Naive thymus-derived CD4-positive, alpha-beta T cell (primary cell): ENCODE measurements at regions of chr20 and their contacts with region 1.

Region 1: DNA sequence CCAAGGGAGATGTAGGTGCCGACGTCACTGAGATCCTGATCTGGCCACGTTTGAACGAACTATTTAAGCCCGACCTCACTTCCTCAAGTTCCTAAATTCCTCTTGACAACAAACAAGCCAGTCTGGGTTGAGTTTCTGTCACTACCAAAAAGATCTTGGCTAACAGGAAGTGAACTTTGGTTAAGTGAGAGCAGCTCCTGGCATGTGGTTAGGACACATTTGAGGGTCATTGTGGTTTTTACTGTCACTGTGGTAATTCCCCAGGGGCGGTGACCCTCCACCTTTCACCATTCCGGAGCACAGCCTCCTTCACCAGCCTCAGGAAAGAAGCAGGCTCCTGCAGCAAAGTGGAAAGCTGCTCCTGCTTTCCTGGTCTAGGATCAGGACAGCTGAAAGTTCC is 43.1 kb upstream of the ZNF831 start:
- DNase-seq: peak in 7 of 9 donors; percentile 23 to 48 (median 35)
- ATAC-seq: peak; percentile 40
- H3K4me3 ChIP-seq: no peak overlapping the region
- H3K4me3 Mint-ChIP-seq: peak overlapping the region; percentile 33 to 96 (median 56)
- H3K27ac ChIP-seq: peak overlapping the region; percentile 94
- H3K27ac Mint-ChIP-seq: peak overlapping the region; percentile 64 to 100 (median 100)
- H3K4me1 ChIP-seq: peaks cover 60 to 84% of the 10 kb centered on the region in 2 donors
- H3K4me1 Mint-ChIP-seq: peaks cover 51 to 98% (median 90%) of the 10 kb centered on the region in 7 donors
- H3K27me3 ChIP-seq: no peaks in the 10 kb centered on the region
- H3K27me3 Mint-ChIP-seq: no peaks in the 10 kb centered on the region

Region 2: GRCh38 chr20:57709931-57710799 is 1410.3 kb before region 1 on chr20 and contains the start of gene PMEPA1:
- CTCF ChIA-PET with region 1: no interaction called
- POLR2A ChIA-PET with region 1: no interaction called
- intact Hi-C with region 1: loop called in 1 of 2 experiments (anchors 1 kb)
- DNase-seq: peak; percentile 91 to 95 (median 93)
- ATAC-seq: peak; percentile 96
- H3K4me3 ChIP-seq: peak within 1 kb of the TSS; percentile 98
- H3K4me3 Mint-ChIP-seq: peak within 1 kb of the TSS; percentile 82 to 97 (median 94)
- H3K27ac ChIP-seq: peak within 1 kb of the TSS; percentile 88
- H3K27ac Mint-ChIP-seq: peak within 1 kb of the TSS; percentile 46 to 97 (median 95)
- H3K4me1 ChIP-seq: peaks cover 11 to 23% of the 10 kb centered on the region in 2 donors
- H3K4me1 Mint-ChIP-seq: peaks cover 15 to 55% (median 44%) of the 10 kb centered on the region in 7 donors
- H3K27me3 ChIP-seq: peaks cover 0 to 7% of the 10 kb centered on the region in 2 donors
- H3K27me3 Mint-ChIP-seq: peaks cover 0 to 51% (median 0%) of the 10 kb centered on the region in 5 donors
- total RNA-seq, gene PMEPA1: 0.44 to 10.0 (median 9.0) TPM

Region 3: DNA sequence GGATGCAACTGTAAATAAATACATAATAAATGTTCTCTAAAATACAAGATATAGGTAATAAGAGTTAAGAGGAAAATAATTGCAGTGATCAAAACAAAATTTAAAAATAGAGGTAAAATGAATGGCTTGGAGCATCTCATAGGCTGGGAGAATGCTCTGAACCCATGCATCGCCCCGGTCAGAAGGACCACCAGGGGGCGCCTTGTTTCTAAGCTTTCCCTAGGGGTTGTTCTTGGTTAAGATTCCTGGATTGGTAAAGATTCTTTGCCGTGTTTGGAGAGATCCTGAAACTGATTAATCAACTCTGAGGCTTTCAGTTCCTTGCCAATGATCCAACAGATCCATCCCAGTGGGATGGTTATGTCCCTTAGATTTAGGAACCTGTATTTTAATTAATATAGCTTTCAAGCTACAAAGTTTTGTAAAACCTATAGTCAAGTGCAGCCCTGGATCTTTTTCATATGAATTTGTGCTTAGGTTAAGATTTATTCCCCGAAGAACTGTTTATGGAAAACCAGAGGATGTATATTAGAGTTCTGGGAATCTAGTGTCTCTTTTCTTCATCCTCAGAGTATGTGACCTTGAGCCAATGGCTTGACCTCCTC is 32.6 kb before region 1 on chr20:
- CTCF ChIA-PET with region 1: interaction called, 33 read pairs
- POLR2A ChIA-PET with region 1: interaction called, 15 read pairs
- intact Hi-C with region 1: loop called in 1 of 2 experiments (anchors 1 kb)
- DNase-seq: peak; percentile 67 to 85 (median 78)
- ATAC-seq: peak; percentile 92
- H3K4me3 ChIP-seq: no peak overlapping the region
- H3K4me3 Mint-ChIP-seq: no peak overlapping the region
- H3K27ac ChIP-seq: no peak overlapping the region
- H3K27ac Mint-ChIP-seq: peak overlapping the region in 4 of 9 donors; percentile 10 to 58 (median 40)
- H3K4me1 ChIP-seq: peaks cover 0 to 5% of the 10 kb centered on the region in 2 donors
- H3K4me1 Mint-ChIP-seq: peaks cover 0 to 7% (median 5%) of the 10 kb centered on the region in 7 donors
- H3K27me3 ChIP-seq: no peaks in the 10 kb centered on the region
- H3K27me3 Mint-ChIP-seq: peaks cover 0 to 32% (median 0%) of the 10 kb centered on the region in 5 donors

Region 4: GRCh38 chr20:59141787-59142581 is 21.5 kb after region 1 on chr20:
- CTCF ChIA-PET with region 1: interaction called, 18 read pairs
- POLR2A ChIA-PET with region 1: interaction called, 172 read pairs
- intact Hi-C with region 1: loop called (anchors 1 kb)
- DNase-seq: no peak
- ATAC-seq: no peak
- H3K4me3 ChIP-seq: no peak overlapping the region
- H3K4me3 Mint-ChIP-seq: no peak overlapping the region
- H3K27ac ChIP-seq: no peak overlapping the region
- H3K27ac Mint-ChIP-seq: peak overlapping the region in 2 of 9 donors; percentile 65 to 72
- H3K4me1 ChIP-seq: peaks cover 19 to 26% of the 10 kb centered on the region in 2 donors
- H3K4me1 Mint-ChIP-seq: peaks cover 13 to 66% (median 58%) of the 10 kb centered on the region in 7 donors
- H3K27me3 ChIP-seq: no peaks in the 10 kb centered on the region
- H3K27me3 Mint-ChIP-seq: peaks cover 0 to 5% (median 0%) of the 10 kb centered on the region in 5 donors

Region 5: GRCh38 chr20:59165891-59166709 is 45.6 kb after region 1 on chr20:
- CTCF ChIA-PET with region 1: interaction called, 7 read pairs
- POLR2A ChIA-PET with region 1: interaction called, 73 read pairs
- intact Hi-C with region 1: loop called (anchors 1 kb)
- DNase-seq: peak in 5 of 9 donors; percentile 43 to 65 (median 50)
- ATAC-seq: peak; percentile 72
- H3K4me3 ChIP-seq: peak overlapping the region; percentile 48
- H3K4me3 Mint-ChIP-seq: peak overlapping the region; percentile 76 to 93 (median 87)
- H3K27ac ChIP-seq: peak overlapping the region; percentile 93
- H3K27ac Mint-ChIP-seq: peak overlapping the region; percentile 95 to 99 (median 98)
- H3K4me1 ChIP-seq: peaks cover 70 to 72% of the 10 kb centered on the region in 2 donors
- H3K4me1 Mint-ChIP-seq: peaks cover 68 to 97% (median 93%) of the 10 kb centered on the region in 7 donors
- H3K27me3 ChIP-seq: no peaks in the 10 kb centered on the region
- H3K27me3 Mint-ChIP-seq: no peaks in the 10 kb centered on the region

Region 6: GRCh38 chr20:59253779-59254319 is 133.4 kb after region 1 on chr20:
- CTCF ChIA-PET with region 1: no interaction called
- POLR2A ChIA-PET with region 1: interaction called, 6 read pairs
- intact Hi-C with region 1: loop called in 1 of 2 experiments (anchors 1 kb)
- DNase-seq: peak in 7 of 9 donors; percentile 10 to 41 (median 25)
- ATAC-seq: peak; percentile 63
- H3K4me3 ChIP-seq: peak overlapping the region; percentile 27
- H3K4me3 Mint-ChIP-seq: peak overlapping the region; percentile 66 to 83 (median 73)
- H3K27ac ChIP-seq: peak overlapping the region; percentile 58
- H3K27ac Mint-ChIP-seq: peak overlapping the region; percentile 83 to 97 (median 93)
- H3K4me1 ChIP-seq: peaks cover 43 to 45% of the 10 kb centered on the region in 2 donors
- H3K4me1 Mint-ChIP-seq: peaks cover 50 to 82% (median 66%) of the 10 kb centered on the region in 7 donors
- H3K27me3 ChIP-seq: no peaks in the 10 kb centered on the region
- H3K27me3 Mint-ChIP-seq: no peaks in the 10 kb centered on the region